ENCODE measurements at regions of chr11 and their contacts with region 1.

Region 1: DNA sequence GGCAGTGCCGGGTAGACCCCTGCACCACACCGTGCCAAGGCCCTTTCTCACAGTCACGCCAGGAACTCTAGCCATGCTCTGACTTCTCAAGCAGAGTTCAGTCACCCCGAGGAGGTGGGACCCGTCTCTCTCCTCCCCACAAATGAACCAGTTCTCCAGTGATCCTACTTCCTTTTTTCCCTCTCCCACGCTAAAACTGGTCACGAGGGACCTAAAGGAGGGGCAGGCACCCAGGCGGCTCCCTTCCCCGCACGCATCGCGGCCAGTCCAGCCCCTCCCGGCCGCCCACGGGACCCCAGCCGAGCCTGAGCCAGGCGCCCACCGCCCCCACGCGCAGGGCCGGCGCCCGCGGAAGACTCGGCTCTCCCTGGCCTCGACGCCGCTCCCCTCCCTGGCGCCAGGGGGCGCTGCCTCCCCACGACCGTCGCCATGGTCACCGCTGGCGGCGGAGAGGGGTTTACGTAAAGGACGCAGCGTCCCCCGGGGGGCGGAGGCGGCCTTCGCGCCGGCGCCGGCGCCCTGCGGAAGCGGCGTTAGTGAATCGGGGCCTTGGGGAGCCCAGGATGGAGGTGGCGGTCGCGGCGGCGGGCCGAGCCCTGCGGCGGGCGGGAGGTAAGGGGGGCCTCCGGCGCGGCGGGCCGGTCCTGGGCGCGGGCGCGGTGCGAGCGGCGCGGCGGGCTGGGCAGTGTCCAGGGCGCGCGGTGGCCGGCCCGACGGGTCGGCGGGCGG is at the start of gene DAGLA:
- DNase-seq: peak; percentile 56 to 87 (median 70)
- H3K4me3 ChIP-seq: peak within 1 kb of the TSS; percentile 39
- H3K27ac ChIP-seq: peak within 1 kb of the TSS in 1 of 2 donors; percentile 35
- H3K4me1 ChIP-seq: peaks cover 6% of the 10 kb centered on the region
- H3K27me3 ChIP-seq: no peaks in the 10 kb centered on the region
- CTCF ChIP-seq: peak; percentile 74 to 96 (median 96)
- EP300 ChIP-seq: no peak
- POLR2A ChIP-seq: no peak
- total RNA-seq, gene DAGLA: 0.48 to 4.4 (median 1.9) TPM

Region 2: GRCh38 chr11:61733120-61733978 is 53.3 kb after region 1 on chr11:
- intact Hi-C with region 1: loop called (anchors 2 to 5 kb)
- DNase-seq: peak; percentile 81 to 91 (median 88)
- H3K4me3 ChIP-seq: no peak overlapping the region
- H3K27ac ChIP-seq: no peak overlapping the region
- H3K4me1 ChIP-seq: no peaks in the 10 kb centered on the region
- H3K27me3 ChIP-seq: no peaks in the 10 kb centered on the region
- CTCF ChIP-seq: peak; percentile 95 to 98 (median 97)
- EP300 ChIP-seq: no peak
- POLR2A ChIP-seq: peak; percentile 8

Measured in ovary (tissue), 10 donors.